ENCODE measurements at regions of chr7 and their contacts with region 1.

Region 1: DNA sequence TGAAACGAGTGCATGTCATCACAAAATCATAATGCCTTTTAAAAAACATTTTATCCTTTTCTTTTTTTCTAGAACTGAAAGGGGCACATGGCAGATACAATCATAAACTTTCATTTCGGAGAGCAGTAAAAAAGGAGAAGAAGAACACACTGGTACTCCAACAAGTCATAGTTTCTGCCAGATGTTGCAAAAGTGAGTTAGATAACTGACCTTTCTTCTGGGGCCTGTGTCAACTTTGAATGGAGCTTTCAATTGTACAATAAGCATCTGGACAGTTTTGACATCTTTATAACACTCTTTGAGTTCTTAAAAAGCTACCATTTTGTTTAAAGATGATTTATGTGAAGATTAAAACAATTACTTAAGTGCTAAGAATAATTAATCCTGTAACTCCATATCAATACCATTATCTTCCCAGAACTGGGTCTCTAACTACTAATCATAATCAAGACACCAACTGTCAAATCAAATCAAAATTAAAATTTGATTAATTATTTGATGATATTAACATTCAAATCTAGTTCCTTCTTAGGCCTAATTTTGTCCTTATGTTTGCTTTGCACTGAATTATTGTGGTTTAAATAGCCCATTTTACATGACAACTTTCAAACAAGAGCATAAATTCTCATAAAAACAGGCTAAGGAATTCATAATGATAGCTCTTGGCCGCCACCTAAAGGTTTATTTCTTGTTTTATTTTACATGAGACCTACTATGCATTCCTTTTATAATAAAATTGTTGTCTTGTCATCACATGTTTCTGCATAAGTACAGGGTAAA is 19.5 kb upstream of the ITGB8 start:
- DNase-seq: no peak
- H3K4me3 Mint-ChIP-seq: no peak overlapping the region
- H3K27ac Mint-ChIP-seq: no peak overlapping the region
- H3K4me1 Mint-ChIP-seq: no peaks in the 10 kb centered on the region
- H3K27me3 Mint-ChIP-seq: peaks cover 13% of the 10 kb centered on the region

Region 2: DNA sequence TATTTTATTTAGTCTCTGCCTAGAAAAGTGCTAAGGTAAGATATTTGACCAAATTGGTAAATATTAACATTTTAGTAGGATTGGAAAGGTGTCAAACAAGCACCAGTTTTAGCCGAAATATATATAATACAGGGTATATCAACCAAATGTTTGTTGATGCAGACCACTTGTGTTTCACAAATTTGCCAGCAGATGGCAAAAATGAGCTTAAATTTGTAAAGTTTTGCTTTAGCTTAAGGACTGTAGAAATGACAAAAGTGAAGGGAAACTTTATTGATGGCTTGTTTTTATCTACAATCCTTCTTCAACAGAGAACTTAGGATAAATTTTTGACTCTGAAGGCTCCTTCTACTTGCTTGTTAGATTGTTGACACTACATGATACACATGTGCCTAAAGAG is 597.5 kb before region 1 on chr7:
- intact Hi-C with region 1: loop called (anchors 10 kb)
- DNase-seq: peak; percentile 83
- H3K4me3 Mint-ChIP-seq: no peak overlapping the region
- H3K27ac Mint-ChIP-seq: no peak overlapping the region
- H3K4me1 Mint-ChIP-seq: peaks cover 10% of the 10 kb centered on the region
- H3K27me3 Mint-ChIP-seq: peaks cover 17% of the 10 kb centered on the region

Region 3: DNA sequence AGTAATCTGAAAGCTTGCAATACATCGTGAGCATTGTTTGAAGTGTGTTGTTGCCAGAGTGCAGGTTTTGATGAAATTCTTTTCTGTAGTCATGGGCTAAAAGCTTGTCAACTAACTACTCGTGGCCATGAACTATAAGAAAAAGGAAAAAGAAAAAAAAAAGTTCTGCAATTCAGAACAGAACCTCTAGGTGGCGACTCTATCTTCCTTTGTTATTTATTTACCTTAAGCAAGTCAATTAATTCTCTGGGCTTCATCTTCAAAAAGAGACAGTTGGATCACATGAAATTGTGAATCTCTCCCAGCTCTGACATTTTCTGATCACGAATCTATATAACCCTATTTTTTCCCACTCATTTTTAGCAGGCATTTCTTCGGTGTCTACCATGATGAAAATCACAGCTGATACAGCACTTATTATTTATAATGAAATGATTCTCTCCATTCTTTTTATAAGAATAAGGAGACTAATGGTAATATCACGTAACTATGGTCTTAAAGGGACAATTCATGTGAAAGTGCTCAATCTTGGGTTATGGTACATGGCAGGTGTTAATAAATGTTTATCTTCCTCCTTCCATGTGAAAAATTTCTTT is 556.5 kb before region 1 on chr7:
- intact Hi-C with region 1: loop called (anchors 2 kb)
- DNase-seq: no peak
- H3K4me3 Mint-ChIP-seq: no peak overlapping the region
- H3K27ac Mint-ChIP-seq: no peak overlapping the region
- H3K4me1 Mint-ChIP-seq: no peaks in the 10 kb centered on the region
- H3K27me3 Mint-ChIP-seq: peaks cover 6% of the 10 kb centered on the region